Sigmoid colon (tissue), 7 donors: ENCODE measurements at regions of chr5 and their contacts with region 1.

Region 1: GRCh38 chr5:103119765-103120606 is at the starts of genes GIN1 and PPIP5K2:
- DNase-seq: peak; percentile 97
- H3K4me3 ChIP-seq: peak within 1 kb of the TSS; percentile 78 to 83 (median 80)
- H3K27ac ChIP-seq: peak within 1 kb of the TSS; percentile 84 to 89 (median 88)
- H3K4me1 ChIP-seq: peaks cover 0 to 50% (median 33%) of the 10 kb centered on the region in 4 donors
- H3K27me3 ChIP-seq: no peaks in the 10 kb centered on the region
- CTCF ChIP-seq: no peak
- EP300 ChIP-seq: no peak
- POLR2A ChIP-seq: peak; percentile 54 to 73
- total RNA-seq, gene GIN1: 7.8 to 14.6 (median 9.9) TPM
- total RNA-seq, gene PPIP5K2: 22.8 to 34.1 (median 28.5) TPM

Region 2: GRCh38 chr5:102754767-102755431 is 365.1 kb before region 1 on chr5 and contains the start of gene PAM:
- intact Hi-C with region 1: loop called (anchors 10 kb)
- DNase-seq: peak; percentile 88
- H3K4me3 ChIP-seq: peak within 1 kb of the TSS; percentile 64 to 89 (median 79)
- H3K27ac ChIP-seq: peak within 1 kb of the TSS; percentile 66 to 85 (median 78)
- H3K4me1 ChIP-seq: peaks cover 0 to 40% (median 38%) of the 10 kb centered on the region in 4 donors
- H3K27me3 ChIP-seq: no peaks in the 10 kb centered on the region
- CTCF ChIP-seq: no peak
- EP300 ChIP-seq: no peak
- POLR2A ChIP-seq: peak in 1 of 2 donors; percentile 34
- total RNA-seq, gene PAM: 198 to 261 (median 240) TPM

Region 3: GRCh38 chr5:103258368-103258956 is 138.5 kb after region 1 on chr5 and contains the start of gene MACIR:
- intact Hi-C with region 1: loop called (anchors 2 kb)
- DNase-seq: peak; percentile 98
- H3K4me3 ChIP-seq: peak within 1 kb of the TSS; percentile 78 to 98 (median 81)
- H3K27ac ChIP-seq: peak within 1 kb of the TSS; percentile 85 to 91 (median 87)
- H3K4me1 ChIP-seq: peaks cover 0 to 37% (median 20%) of the 10 kb centered on the region in 4 donors
- H3K27me3 ChIP-seq: no peaks in the 10 kb centered on the region
- CTCF ChIP-seq: no peak
- EP300 ChIP-seq: no peak
- POLR2A ChIP-seq: peak in 1 of 2 donors; percentile 54
- total RNA-seq, gene MACIR: 2.6 to 9.3 (median 6.3) TPM

Region 4: DNA sequence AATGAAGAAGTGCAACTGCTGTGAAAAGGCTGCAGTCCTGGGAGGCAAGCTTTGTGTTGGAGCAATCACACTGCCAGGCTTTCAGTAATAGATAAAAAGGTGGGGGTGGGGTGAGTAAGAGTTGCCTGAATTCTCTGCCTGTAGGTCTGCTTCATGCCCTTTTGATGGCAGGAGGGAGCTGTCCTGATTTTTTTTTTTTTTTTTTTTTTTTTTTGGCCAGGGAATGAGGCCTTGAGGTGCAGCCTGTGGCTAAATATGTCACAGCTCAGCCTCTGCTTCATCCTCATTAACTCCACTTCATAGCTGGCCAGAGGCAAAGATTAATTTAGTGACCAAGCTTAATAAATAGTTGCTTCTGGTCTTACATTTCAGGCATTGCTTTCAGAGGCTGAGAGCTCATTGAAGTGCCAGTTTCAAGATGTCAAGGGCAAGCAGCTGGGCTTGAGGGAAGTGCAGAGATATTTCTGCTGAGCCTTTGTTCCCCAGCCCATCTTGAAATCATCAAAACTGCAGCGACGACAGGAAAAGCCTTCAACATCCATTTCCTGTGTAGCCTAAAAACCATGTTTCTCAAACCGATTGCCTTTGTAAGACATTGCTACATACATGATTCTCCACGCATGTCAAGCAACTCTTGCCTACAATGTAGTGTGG is 273.2 kb after region 1 on chr5:
- intact Hi-C with region 1: no loop called
- DNase-seq: peak; percentile 63
- H3K4me3 ChIP-seq: no peak overlapping the region
- H3K27ac ChIP-seq: no peak overlapping the region
- H3K4me1 ChIP-seq: no peaks in the 10 kb centered on the region
- H3K27me3 ChIP-seq: no peaks in the 10 kb centered on the region
- CTCF ChIP-seq: no peak
- EP300 ChIP-seq: no peak
- POLR2A ChIP-seq: no peak

Region 5: GRCh38 chr5:103444333-103445038 is 324.5 kb after region 1 on chr5:
- intact Hi-C with region 1: no loop called
- DNase-seq: no peak
- H3K4me3 ChIP-seq: no peak overlapping the region
- H3K27ac ChIP-seq: no peak overlapping the region
- H3K4me1 ChIP-seq: no peaks in the 10 kb centered on the region
- H3K27me3 ChIP-seq: no peaks in the 10 kb centered on the region
- CTCF ChIP-seq: no peak
- EP300 ChIP-seq: no peak
- POLR2A ChIP-seq: no peak